Activated B cell treated with CpG ODN at 0.5 μM for 24 hours (primary cell): ENCODE measurements at regions of chr2 and their contacts with region 1.

Region 1: GRCh38 chr2:241315093-241315878 is at the start of gene HDLBP:
- DNase-seq: peak; percentile 100
- ATAC-seq: peak; percentile 73
- H3K4me3 Mint-ChIP-seq: peak within 1 kb of the TSS; percentile 98
- H3K27ac Mint-ChIP-seq: peak within 1 kb of the TSS; percentile 100
- H3K4me1 Mint-ChIP-seq: peaks cover 78% of the 10 kb centered on the region
- H3K27me3 Mint-ChIP-seq: no peaks in the 10 kb centered on the region
- CTCF ChIP-seq: no peak
- total RNA-seq, gene HDLBP: 158 and 168 TPM in 2 replicates

Region 2: DNA sequence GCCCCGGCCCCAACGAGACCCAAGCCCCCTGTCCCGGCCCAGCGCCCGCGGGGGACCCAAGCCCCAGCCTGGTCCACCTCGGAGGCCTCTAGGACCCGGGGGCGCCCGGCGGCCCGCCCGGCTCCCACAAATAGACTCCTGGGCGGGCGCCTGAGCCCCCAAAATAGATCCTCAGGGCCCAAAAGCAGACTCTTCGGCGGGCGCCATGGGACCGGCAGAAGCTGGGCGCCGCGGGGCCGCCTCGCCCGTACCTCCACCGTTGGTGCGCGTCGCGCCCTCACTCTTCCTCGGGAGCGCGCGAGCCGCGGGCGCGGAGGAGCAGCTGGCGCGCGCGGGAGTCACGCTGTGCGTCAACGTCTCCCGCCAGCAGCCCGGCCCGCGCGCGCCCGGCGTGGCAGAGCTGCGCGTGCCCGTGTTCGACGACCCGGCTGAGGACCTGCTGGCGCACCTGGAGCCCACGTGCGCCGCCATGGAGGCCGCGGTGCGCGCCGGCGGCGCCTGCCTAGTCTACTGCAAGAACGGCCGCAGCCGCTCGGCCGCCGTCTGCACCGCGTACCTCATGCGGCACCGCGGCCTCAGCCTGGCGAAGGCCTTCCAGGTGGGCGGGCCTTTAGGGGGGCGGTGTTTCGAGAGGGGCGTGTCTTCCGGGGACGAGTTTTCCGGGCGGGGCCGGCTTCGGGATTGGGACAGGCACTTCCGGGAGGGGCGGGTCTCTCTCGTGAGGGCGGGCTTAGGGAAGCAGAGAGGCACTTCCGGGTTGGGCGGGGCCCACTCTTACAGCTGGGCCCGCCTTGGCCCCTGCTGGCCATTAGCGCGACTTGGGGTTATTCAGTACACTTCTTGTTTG is 754.6 kb before region 1 on chr2:
- CTCF ChIA-PET with region 1: no interaction called
- POLR2A ChIA-PET with region 1: interaction called, 6 read pairs
- intact Hi-C with region 1: loop called (anchors 2 kb)
- DNase-seq: peak; percentile 99
- ATAC-seq: peak; percentile 70
- H3K4me3 Mint-ChIP-seq: peak overlapping the region; percentile 81
- H3K27ac Mint-ChIP-seq: peak overlapping the region; percentile 89
- H3K4me1 Mint-ChIP-seq: peaks cover 77% of the 10 kb centered on the region
- H3K27me3 Mint-ChIP-seq: no peaks in the 10 kb centered on the region
- CTCF ChIP-seq: no peak

Region 3: DNA sequence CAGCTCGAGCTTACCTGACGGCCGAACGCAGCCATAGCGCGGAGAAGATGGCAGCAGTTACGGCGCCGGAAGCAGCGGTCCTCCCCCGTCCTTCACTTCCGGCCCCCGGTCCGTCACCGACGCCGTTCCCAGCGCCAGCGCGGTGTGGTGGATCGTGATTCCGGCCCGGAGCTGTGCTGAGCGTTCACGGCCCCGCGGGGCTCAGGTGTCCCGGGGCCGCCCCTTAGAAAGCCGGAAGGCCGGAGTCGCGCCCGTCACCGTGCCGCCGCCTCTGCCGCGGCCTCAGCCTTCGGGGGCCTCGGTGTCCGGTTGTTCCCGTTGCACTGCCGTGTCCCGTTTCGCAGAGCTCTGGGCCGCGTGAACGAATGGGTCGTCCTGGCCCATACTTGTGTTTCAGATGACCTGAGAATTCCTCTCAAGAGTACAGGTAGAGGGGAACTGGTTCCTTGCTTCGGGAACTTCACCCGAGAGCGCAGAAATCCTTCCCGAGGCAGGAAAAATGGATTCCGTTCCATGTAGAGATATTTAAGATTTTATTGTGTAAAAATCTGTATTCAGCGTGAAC is 213.0 kb before region 1 on chr2 and contains the start of gene MTERF4:
- CTCF ChIA-PET with region 1: no interaction called
- POLR2A ChIA-PET with region 1: interaction called, 17 read pairs
- intact Hi-C with region 1: no loop called
- DNase-seq: peak; percentile 85
- ATAC-seq: peak; percentile 92
- H3K4me3 Mint-ChIP-seq: peak within 1 kb of the TSS; percentile 97
- H3K27ac Mint-ChIP-seq: peak within 1 kb of the TSS; percentile 98
- H3K4me1 Mint-ChIP-seq: peaks cover 55% of the 10 kb centered on the region
- H3K27me3 Mint-ChIP-seq: no peaks in the 10 kb centered on the region
- CTCF ChIP-seq: no peak
- total RNA-seq, gene MTERF4: 99.7 and 122 TPM in 2 replicates

Region 4: DNA sequence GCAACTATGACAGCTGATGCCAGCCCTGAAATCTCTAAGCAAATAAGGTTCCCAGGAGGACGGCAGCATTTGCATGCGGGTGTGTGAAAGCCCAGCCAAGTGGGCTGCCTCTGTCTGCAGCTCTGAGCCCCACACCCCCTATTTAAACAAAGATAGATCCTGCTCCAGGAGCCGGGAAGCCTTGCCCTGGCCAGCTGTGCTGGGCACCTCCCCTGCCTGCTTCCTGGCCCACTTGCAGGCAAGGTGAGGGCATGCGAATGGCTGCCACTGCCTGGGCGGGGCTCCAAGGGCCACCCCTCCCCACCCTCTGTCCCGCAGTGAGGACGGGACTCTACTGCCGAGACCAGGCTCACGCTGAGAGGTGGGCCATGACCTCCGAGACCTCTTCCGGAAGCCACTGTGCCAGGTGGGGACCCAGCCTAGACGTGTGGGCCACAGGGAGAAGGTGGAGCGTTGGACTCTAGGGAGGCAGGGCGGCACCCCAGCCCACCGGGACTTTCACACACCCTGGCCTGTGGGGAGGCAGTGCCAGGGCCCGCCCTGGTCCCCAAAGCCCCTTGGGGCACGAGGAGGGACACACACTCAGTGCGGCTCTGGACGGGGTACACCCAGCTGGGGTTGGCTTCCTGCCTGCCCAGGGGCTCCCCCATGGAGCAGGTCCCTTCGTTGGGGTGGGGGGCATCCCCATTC is 126.8 kb before region 1 on chr2 and contains the start of gene ANO7:
- CTCF ChIA-PET with region 1: no interaction called
- POLR2A ChIA-PET with region 1: no interaction called
- intact Hi-C with region 1: no loop called
- DNase-seq: no peak
- ATAC-seq: peak; percentile 69
- H3K4me3 Mint-ChIP-seq: peak within 1 kb of the TSS; percentile 53
- H3K27ac Mint-ChIP-seq: no peak within 1 kb of the TSS
- H3K4me1 Mint-ChIP-seq: peaks cover 9% of the 10 kb centered on the region
- H3K27me3 Mint-ChIP-seq: no peaks in the 10 kb centered on the region
- CTCF ChIP-seq: no peak
- total RNA-seq, gene ANO7: 1.2 and 1.5 TPM in 2 replicates

Region 5: GRCh38 chr2:241334813-241335212 is 19.5 kb after region 1 on chr2:
- CTCF ChIA-PET with region 1: no interaction called
- POLR2A ChIA-PET with region 1: interaction called, 18 read pairs
- intact Hi-C with region 1: loop called (anchors 1 kb)
- DNase-seq: no peak
- ATAC-seq: no peak
- H3K4me3 Mint-ChIP-seq: no peak overlapping the region
- H3K27ac Mint-ChIP-seq: no peak overlapping the region
- H3K4me1 Mint-ChIP-seq: peaks cover 19% of the 10 kb centered on the region
- H3K27me3 Mint-ChIP-seq: no peaks in the 10 kb centered on the region
- CTCF ChIP-seq: no peak

Region 6: DNA sequence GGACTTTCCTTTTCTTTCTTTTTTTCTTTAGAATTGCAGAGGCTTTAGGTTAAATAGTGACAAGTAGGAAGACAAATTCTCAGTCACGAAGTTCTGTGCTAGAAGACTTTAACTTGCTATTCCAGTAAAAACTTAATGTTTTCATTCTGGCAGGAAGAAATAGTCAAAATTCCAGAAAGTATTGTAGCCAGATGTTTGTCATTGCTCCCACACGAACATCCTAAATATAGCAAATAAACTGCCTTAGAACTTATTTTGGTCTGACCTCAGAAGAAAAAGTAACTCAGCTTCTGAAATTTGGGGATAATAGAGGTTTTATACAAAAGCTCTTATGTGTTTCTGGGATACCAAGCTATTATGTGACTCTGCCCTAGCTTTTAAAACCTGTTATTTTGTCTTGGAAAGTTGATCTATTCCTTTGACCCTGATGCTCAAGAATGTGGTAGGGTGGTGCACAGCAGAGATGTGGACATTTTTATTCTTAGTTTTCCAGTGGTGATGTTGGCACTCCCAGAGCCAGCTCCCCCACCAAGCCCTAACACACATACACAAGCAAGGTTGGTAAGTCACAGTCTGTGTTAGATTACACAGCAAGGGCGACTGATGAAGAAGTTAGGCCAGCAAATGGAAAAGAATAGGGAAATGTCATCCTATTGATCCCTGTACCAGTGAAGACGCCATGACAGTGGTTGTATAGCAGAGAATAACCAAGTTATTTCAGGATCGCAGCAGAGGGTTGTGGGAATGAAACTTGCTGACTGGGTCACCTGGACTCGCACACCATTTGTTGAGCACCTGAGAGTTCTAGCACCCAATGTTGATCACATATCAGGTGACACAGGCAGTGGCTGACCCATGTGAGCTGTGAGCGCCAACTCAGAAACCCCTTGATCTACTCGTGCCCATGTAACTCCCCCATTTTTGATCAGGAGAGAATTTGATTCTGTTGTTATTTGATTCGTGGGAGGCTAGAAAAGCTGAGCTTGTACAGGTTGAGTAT is 64.5 kb after region 1 on chr2:
- CTCF ChIA-PET with region 1: interaction called, 3 read pairs
- POLR2A ChIA-PET with region 1: interaction called, 14 read pairs
- intact Hi-C with region 1: no loop called
- DNase-seq: no peak
- ATAC-seq: no peak
- H3K4me3 Mint-ChIP-seq: no peak overlapping the region
- H3K27ac Mint-ChIP-seq: no peak overlapping the region
- H3K4me1 Mint-ChIP-seq: peaks cover 23% of the 10 kb centered on the region
- H3K27me3 Mint-ChIP-seq: no peaks in the 10 kb centered on the region
- CTCF ChIP-seq: no peak

Region 7: DNA sequence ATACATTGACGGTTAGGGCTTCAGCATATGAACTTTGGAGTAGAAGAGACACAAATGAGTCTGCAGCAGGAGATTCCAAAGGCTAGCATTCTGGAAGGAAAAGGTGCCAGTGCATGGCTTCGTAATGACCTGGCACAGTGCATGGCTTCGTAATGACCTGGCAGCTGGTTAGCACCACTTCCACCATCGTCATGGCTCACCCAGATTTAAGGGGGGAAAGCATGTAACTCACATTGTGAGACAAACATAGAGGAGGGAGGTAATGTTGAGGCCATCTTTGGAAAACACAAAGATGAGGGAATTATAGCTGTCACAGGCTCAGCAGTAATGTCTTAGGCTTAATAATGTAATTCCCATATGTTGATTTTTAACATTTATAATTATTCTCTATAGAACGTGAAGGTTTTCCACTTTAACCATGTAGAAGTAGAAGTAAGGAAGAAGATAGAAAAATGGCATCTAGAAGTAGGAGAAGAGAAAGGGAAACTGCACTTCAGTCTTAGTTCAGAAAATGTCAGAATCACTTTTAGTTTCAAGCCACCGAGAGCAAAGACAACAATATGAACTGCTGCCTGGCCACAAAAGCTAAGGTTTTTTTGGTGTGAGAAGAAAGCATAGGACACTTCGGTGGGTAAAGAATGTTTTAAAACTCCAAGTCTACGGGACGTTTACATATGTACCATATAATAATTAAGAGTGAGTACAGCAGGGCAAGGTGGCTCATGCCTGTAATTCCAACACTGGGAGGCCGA is 199.9 kb after region 1 on chr2:
- CTCF ChIA-PET with region 1: no interaction called
- POLR2A ChIA-PET with region 1: no interaction called
- intact Hi-C with region 1: no loop called
- DNase-seq: no peak
- ATAC-seq: no peak
- H3K4me3 Mint-ChIP-seq: no peak overlapping the region
- H3K27ac Mint-ChIP-seq: no peak overlapping the region
- H3K4me1 Mint-ChIP-seq: no peaks in the 10 kb centered on the region
- H3K27me3 Mint-ChIP-seq: peaks cover 3% of the 10 kb centered on the region
- CTCF ChIP-seq: no peak

Region 8: GRCh38 chr2:241702132-241703031 is 387.1 kb after region 1 on chr2:
- CTCF ChIA-PET with region 1: no interaction called
- POLR2A ChIA-PET with region 1: interaction called, 18 read pairs
- intact Hi-C with region 1: loop called (anchors 1 kb)
- DNase-seq: peak; percentile 93
- ATAC-seq: peak; percentile 73
- H3K4me3 Mint-ChIP-seq: peak overlapping the region; percentile 82
- H3K27ac Mint-ChIP-seq: peak overlapping the region; percentile 79
- H3K4me1 Mint-ChIP-seq: peaks cover 26% of the 10 kb centered on the region
- H3K27me3 Mint-ChIP-seq: no peaks in the 10 kb centered on the region
- CTCF ChIP-seq: no peak